Activated T-helper 2 cell treated with anti-CD3 and anti-CD28 coated beads, Interferon-gamma antibody, Interleukin-2, Interleukin-4, amounts not matched to agents 10 μg/mL and 5 μg/mL and 100 μg/mL, durations not matched to agents 14 hours and 24 hours and 36 hours (primary cell): ENCODE measurements at regions of chr4 and their contacts with region 1.

Region 1: GRCh38 chr4:53432528-53433424 is 55.3 kb downstream of the FIP1L1 start:
- DNase-seq: no peak
- H3K4me3 Mint-ChIP-seq: no peak overlapping the region
- H3K27ac Mint-ChIP-seq: peak overlapping the region; percentile 42
- H3K4me1 Mint-ChIP-seq: peaks cover 21% of the 10 kb centered on the region
- H3K27me3 Mint-ChIP-seq: no peaks in the 10 kb centered on the region

Region 2: GRCh38 chr4:53015681-53016080 is 417.1 kb before region 1 on chr4:
- intact Hi-C with region 1: loop called (anchors 10 kb)
- DNase-seq: no peak
- H3K4me3 Mint-ChIP-seq: no peak overlapping the region
- H3K27ac Mint-ChIP-seq: no peak overlapping the region
- H3K4me1 Mint-ChIP-seq: peaks cover 28% of the 10 kb centered on the region
- H3K27me3 Mint-ChIP-seq: no peaks in the 10 kb centered on the region